OCI-LY7 (cell line): ENCODE measurements at regions of chr6 and their contacts with region 1.

Region 1: GRCh38 chr6:167298153-167298552 is 7.0 kb downstream of the UNC93A start:
- DNase-seq: peak; percentile 29
- H3K4me3 ChIP-seq: no peak overlapping the region
- H3K27ac ChIP-seq: no peak overlapping the region
- H3K4me1 ChIP-seq: no peaks in the 10 kb centered on the region
- CTCF ChIP-seq: no peak

Region 2: GRCh38 chr6:166775180-166776081 is 522.7 kb before region 1 on chr6:
- CTCF ChIA-PET with region 1: no interaction called
- POLR2A ChIA-PET with region 1: no interaction called
- intact Hi-C with region 1: loop called (anchors 10 kb)
- DNase-seq: peak; percentile 83
- H3K4me3 ChIP-seq: no peak overlapping the region
- H3K27ac ChIP-seq: no peak overlapping the region
- H3K4me1 ChIP-seq: no peaks in the 10 kb centered on the region
- CTCF ChIP-seq: peak; percentile 91

Region 3: GRCh38 chr6:167441715-167442206 is 143.6 kb after region 1 on chr6:
- CTCF ChIA-PET with region 1: no interaction called
- POLR2A ChIA-PET with region 1: no interaction called
- intact Hi-C with region 1: no loop called
- DNase-seq: no peak
- H3K4me3 ChIP-seq: no peak overlapping the region
- H3K27ac ChIP-seq: no peak overlapping the region
- H3K4me1 ChIP-seq: no peaks in the 10 kb centered on the region
- CTCF ChIP-seq: no peak